ENCODE measurements at regions of chr5 and their contacts with region 1.

Region 1: GRCh38 chr5:150155258-150156026 is at the start of gene PDGFRB:
- DNase-seq: peak; percentile 78
- H3K4me3 ChIP-seq: peak within 1 kb of the TSS; percentile 97
- H3K27ac ChIP-seq: peak within 1 kb of the TSS; percentile 87
- H3K27me3 ChIP-seq: no peaks in the 10 kb centered on the region
- CTCF ChIP-seq: 0 out of 2 replicates have a peak, but pooled peaks have one; percentile 3
- polyA plus RNA-seq, gene PDGFRB: 118 and 149 TPM in 2 replicates

Region 2: GRCh38 chr5:149932445-149933350 is 222.7 kb before region 1 on chr5:
- CTCF ChIA-PET with region 1: no interaction called
- POLR2A ChIA-PET with region 1: no interaction called
- DNase-seq: no peak
- H3K4me3 ChIP-seq: no peak overlapping the region
- H3K27ac ChIP-seq: no peak overlapping the region
- H3K27me3 ChIP-seq: peaks cover 3% of the 10 kb centered on the region
- CTCF ChIP-seq: peak; percentile 45

Region 3: GRCh38 chr5:150143350-150144245 is 11.8 kb before region 1 on chr5:
- CTCF ChIA-PET with region 1: interaction called, 3 read pairs
- POLR2A ChIA-PET with region 1: interaction called, 31 read pairs
- DNase-seq: peak; percentile 92
- H3K4me3 ChIP-seq: peak overlapping the region; percentile 29
- H3K27ac ChIP-seq: peak overlapping the region; percentile 100
- H3K27me3 ChIP-seq: no peaks in the 10 kb centered on the region
- CTCF ChIP-seq: no peak

Region 4: DNA sequence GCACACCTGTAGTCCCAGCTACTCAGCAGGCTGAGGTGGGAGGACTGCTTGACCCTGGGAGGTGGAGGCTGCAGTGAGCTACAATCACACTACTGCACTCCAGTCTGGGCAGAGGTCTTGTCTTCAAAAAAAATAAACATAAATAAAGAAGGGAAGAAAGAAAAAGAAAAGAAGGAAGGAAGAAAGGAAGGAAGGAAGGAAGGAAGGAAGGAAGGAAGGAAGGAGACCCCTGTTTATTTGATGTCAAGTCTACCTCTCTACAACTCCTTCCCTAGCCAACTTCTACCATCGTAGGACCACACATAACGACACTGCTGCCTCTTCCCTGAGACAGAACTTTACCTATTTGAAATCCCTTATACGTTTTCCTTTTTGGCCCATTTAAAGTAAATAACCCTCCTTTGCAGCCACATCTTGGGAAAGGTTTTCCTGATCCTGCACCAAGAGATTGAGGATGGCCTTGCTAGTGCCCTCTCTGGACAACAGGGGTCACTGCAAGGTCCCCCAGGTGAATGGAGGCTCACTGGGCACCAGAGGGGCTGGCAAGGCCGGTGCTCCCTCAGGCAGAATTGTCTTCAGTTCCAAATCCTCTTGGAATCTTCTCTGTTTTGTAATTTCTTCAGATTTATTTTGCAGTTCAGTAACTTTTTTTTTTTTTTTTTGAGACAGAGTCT is 283.6 kb after region 1 on chr5:
- CTCF ChIA-PET with region 1: no interaction called
- POLR2A ChIA-PET with region 1: interaction called, 11 read pairs
- DNase-seq: no peak
- H3K4me3 ChIP-seq: no peak overlapping the region
- H3K27ac ChIP-seq: no peak overlapping the region
- H3K27me3 ChIP-seq: no peaks in the 10 kb centered on the region
- CTCF ChIP-seq: peak; percentile 57